PC-3 (cell line): ENCODE measurements at regions of chr1 and their contacts with region 1.

Region 1: GRCh38 chr1:207205614-207206061 is 101.6 kb downstream of the C4BPA start:
- DNase-seq: peak; percentile 31
- ATAC-seq: peak; percentile 30
- H3K4me3 ChIP-seq: no peak overlapping the region
- H3K27ac ChIP-seq: peak overlapping the region; percentile 74
- H3K4me1 ChIP-seq: peaks cover 14% of the 10 kb centered on the region
- H3K27me3 ChIP-seq: no peaks in the 10 kb centered on the region
- CTCF ChIP-seq: no peak

Region 2: DNA sequence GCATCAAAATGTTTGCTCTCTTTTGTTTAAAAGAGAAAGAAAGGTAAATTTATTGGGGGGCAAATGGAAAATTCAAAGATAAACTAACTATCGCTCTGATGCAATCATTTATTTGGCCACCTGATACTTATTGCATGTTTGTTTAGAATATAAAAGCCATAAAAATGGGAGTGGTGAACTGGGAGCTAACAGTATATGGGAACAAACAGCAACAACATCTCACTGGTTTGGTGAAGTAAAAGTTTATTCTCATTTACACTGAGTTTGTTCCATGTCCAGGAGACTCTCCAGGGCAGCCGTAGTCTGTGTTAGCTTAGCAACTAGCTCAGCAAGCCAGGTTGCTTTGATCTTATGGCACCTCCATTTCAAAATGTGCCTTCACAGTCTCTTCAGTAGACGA is 81.2 kb before region 1 on chr1:
- CTCF ChIA-PET with region 1: no interaction called
- POLR2A ChIA-PET with region 1: no interaction called
- intact Hi-C with region 1: no loop called
- DNase-seq: no peak
- ATAC-seq: no peak
- H3K4me3 ChIP-seq: no peak overlapping the region
- H3K27ac ChIP-seq: no peak overlapping the region
- H3K4me1 ChIP-seq: no peaks in the 10 kb centered on the region
- H3K27me3 ChIP-seq: no peaks in the 10 kb centered on the region
- CTCF ChIP-seq: no peak

Region 3: GRCh38 chr1:207221934-207222351 is 16.3 kb after region 1 on chr1:
- CTCF ChIA-PET with region 1: no interaction called
- POLR2A ChIA-PET with region 1: no interaction called
- intact Hi-C with region 1: loop called (anchors 1 kb)
- DNase-seq: peak; percentile 97
- ATAC-seq: peak; percentile 84
- H3K4me3 ChIP-seq: no peak overlapping the region
- H3K27ac ChIP-seq: peak overlapping the region; percentile 69
- H3K4me1 ChIP-seq: peaks cover 48% of the 10 kb centered on the region
- H3K27me3 ChIP-seq: no peaks in the 10 kb centered on the region
- CTCF ChIP-seq: no peak

Region 4: GRCh38 chr1:207304710-207305151 is 99.1 kb after region 1 on chr1:
- CTCF ChIA-PET with region 1: no interaction called
- POLR2A ChIA-PET with region 1: no interaction called
- intact Hi-C with region 1: loop called (anchors 1 kb)
- DNase-seq: peak; percentile 99
- ATAC-seq: peak; percentile 88
- H3K4me3 ChIP-seq: no peak overlapping the region
- H3K27ac ChIP-seq: peak overlapping the region; percentile 89
- H3K4me1 ChIP-seq: peaks cover 38% of the 10 kb centered on the region
- H3K27me3 ChIP-seq: no peaks in the 10 kb centered on the region
- CTCF ChIP-seq: no peak